HEK293 (cell line): ENCODE measurements at regions of chr17 and their contacts with region 1.

Region 1: GRCh38 chr17:38674749-38675615 is at the start of gene EPOP:
- H3K4me3 ChIP-seq: peak within 1 kb of the TSS; percentile 45
- H3K27ac ChIP-seq: peak within 1 kb of the TSS; percentile 8; the same call in 1 of the 2 replicates
- H3K4me1 ChIP-seq: peaks cover 18% of the 10 kb centered on the region
- CTCF ChIP-seq: no peak

Region 2: DNA sequence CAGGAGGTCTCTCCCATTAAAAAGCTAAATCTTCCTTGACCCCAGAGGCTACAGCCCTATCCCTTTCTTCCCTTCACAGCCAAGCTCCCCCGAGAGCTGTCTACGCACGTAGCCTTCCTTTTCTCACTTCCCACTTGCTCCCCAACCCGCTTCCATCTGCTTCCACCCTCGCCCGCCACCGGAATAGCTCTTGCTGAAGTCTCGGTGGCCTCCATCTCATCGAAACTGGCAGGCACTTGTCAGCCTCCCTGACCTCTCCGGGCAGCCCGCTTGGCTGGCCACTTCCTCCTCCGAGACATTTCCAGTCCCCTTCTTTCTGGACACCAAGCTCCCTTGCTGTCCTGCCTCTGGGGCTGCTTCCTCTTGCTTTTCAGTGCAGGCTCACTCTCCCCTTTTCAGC is 10.5 kb after region 1 on chr17:
- CTCF ChIA-PET with region 1: interaction called, 19 read pairs
- POLR2A ChIA-PET with region 1: interaction called, 3 read pairs
- H3K4me3 ChIP-seq: no peak overlapping the region
- H3K27ac ChIP-seq: no peak overlapping the region
- H3K4me1 ChIP-seq: no peaks in the 10 kb centered on the region
- CTCF ChIP-seq: no peak

Region 3: GRCh38 chr17:38693700-38694329 is 18.8 kb after region 1 on chr17:
- CTCF ChIA-PET with region 1: interaction called, 18 read pairs
- POLR2A ChIA-PET with region 1: interaction called, 3 read pairs
- H3K4me3 ChIP-seq: no peak overlapping the region
- H3K27ac ChIP-seq: no peak overlapping the region
- H3K4me1 ChIP-seq: no peaks in the 10 kb centered on the region
- CTCF ChIP-seq: no peak; the same call in 1 of the 2 replicates

Region 4: GRCh38 chr17:38729886-38730525 is 55.0 kb after region 1 on chr17 and contains the start of gene CISD3:
- CTCF ChIA-PET with region 1: interaction called, 60 read pairs
- POLR2A ChIA-PET with region 1: interaction called, 9 read pairs
- H3K4me3 ChIP-seq: peak within 1 kb of the TSS; percentile 67
- H3K27ac ChIP-seq: peak within 1 kb of the TSS; percentile 67
- H3K4me1 ChIP-seq: peaks cover 5% of the 10 kb centered on the region
- CTCF ChIP-seq: 0 out of 2 replicates have a peak, but pooled peaks have one; percentile 24